Motor neuron (in vitro differentiated cells): ENCODE measurements at regions of chr2 and their contacts with region 1.

Region 1: DNA sequence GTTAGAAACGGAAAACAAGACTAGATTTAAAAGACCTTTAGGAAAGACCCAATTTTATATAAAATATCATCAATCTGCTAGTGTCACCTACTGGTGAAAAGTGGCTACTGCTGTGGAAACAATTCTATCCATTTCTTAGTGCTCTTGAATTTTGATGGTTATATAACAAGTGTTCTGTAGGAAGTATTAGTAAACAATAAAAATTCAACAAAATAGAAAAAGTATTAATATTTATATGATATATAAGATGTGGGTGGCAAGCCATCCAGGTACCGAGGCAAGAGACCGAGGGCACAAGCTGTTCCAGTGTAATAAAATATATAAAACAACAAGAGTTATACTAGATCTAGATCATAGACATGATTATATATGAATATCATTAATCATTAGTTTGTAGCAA is 6.2 kb upstream of the TMEM87B start:
- ATAC-seq: peak in 3 of 8 experiments; percentile 42 to 75 (median 64)
- H3K4me3 ChIP-seq: no peak overlapping the region
- H3K27ac ChIP-seq: no peak overlapping the region
- H3K4me1 ChIP-seq: peaks cover 0 to 2% of the 10 kb centered on the region in 2 donors

Region 2: DNA sequence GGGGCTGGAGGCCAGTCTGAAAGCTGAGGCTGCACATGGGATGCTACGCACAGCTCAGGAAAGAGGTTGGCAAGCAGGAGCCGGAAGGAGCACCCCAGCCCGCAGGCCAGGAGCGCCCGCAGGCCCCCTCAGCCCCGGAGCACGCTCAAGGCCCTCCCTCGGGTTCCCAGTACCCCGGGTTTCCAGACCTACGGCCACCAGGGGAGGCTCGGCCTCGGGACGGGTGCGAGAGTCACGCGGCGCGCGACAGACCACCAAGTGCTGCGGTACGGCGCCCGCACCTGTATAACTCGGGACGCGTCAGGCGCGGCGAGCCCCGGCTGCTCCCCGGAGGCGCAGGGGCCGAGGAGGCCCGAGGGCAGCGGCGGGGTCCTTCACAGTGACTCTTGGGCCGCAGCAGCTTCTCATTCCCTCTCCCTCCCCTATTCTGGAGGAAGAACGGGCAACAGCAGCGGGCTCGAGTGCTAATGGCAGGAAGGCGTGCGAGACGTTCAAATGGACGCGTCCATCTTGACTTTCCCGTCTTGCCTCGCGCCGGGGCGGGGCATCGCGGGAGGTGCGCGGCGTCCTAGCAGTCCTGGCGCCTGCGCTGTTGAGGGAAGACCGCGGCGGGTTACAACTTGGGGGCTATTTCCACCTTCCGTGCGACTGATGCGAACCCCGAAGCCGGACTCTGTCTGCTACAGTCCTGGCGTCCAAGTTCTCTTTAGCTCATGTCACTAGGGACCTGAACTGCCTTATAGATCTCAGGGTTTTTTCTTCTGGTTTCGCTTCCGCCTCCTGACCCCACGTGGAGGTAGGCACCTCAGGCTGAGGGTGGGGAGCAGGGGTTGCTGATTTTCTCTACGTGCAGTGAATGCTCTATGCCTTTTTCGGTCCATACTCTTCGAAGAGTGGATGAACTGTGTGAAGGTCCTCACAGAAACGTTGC is 165.0 kb before region 1 on chr2 and contains the start of gene ANAPC1:
- in situ Hi-C with region 1: loop called in 3 of 9 experiments (anchors 10 to 25 kb)
- ATAC-seq: peak; percentile 92 to 97 (median 95)
- H3K4me3 ChIP-seq: peak within 1 kb of the TSS; percentile 58 to 91 (median 76)
- H3K27ac ChIP-seq: peak within 1 kb of the TSS; percentile 60 to 77
- H3K4me1 ChIP-seq: peaks cover 3 to 8% of the 10 kb centered on the region in 2 donors
- total RNA-seq, gene ANAPC1: 21.7 to 59.3 (median 33.1) TPM

Region 3: DNA sequence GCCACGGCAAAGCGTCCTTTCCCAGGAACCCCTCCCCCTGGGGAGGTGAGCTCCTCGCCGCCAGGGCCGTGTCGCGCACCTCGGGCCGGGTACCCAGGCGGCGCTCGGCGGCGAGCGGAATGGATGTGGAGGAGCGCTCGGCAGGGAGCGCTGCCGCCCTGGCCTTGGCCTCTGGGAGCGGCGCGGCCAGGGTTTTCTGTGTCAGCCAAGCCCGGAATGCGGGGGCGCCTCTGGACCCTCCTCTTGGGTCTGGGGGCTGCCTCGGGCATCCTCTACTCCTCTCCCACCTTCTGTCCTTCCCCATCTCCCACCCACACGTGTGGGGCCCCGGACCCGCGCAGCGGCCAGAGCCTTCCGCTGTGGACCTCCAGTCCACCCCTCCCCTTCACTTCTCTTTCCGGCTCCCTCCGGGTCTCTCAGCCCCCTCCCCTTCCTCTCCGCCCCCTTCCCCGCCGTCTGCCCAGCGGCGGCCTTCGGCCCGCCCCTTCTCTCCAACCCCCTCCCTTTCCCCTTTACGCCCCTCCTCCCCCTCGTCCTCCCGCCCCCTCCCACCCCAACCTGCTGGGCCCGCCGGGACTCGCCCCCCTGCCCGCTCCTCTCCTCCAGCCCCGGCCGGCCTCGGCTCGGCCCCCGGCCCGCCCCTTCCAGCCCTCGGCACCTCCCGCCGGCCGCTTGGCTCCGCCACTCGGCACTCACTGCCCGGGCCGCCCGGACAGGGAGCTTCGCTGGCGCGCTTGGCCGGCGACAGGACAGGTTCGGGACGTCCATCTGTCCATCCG is 150.8 kb before region 1 on chr2 and contains the start of gene MERTK:
- in situ Hi-C with region 1: loop called in 7 of 9 experiments (anchors 5 to 25 kb)
- ATAC-seq: peak; percentile 81 to 88 (median 85)
- H3K4me3 ChIP-seq: peak within 1 kb of the TSS; percentile 67 to 90 (median 78)
- H3K27ac ChIP-seq: peak within 1 kb of the TSS; percentile 56 to 77
- H3K4me1 ChIP-seq: peaks cover 7 to 11% of the 10 kb centered on the region in 2 donors
- total RNA-seq, gene MERTK: 1.8 to 20.3 (median 2.9) TPM

Region 4: DNA sequence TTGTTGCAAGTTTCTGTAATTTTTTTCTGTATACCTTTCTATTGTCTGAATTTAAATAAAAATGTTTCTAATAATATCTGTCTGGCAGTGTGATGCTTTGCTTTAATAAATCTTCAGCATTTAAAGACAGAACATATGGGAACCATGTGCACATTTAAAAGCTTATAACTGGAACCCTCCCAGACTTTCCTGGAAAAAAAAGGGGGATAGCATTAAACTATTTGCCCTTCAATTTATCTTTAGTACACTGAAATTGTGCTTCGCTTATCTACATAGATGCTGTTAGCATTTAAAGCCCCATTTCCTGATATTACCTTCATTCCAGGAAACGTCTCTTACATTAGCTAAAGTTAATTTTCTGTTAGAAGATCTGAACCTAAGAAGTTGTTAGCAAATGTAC is 291.1 kb after region 1 on chr2:
- in situ Hi-C with region 1: no loop called
- ATAC-seq: peak in 2 of 8 experiments; percentile 5 to 16
- H3K4me3 ChIP-seq: no peak overlapping the region
- H3K27ac ChIP-seq: no peak overlapping the region
- H3K4me1 ChIP-seq: no peaks in the 10 kb centered on the region